Upper lobe of right lung (tissue), 1 donor: ENCODE measurements at regions of chr9 and their contacts with region 1.

Region 1: GRCh38 chr9:124617471-124618141 is 110.4 kb upstream of the NR5A1 start:
- DNase-seq: peak; percentile 82
- ATAC-seq: peak; percentile 98
- H3K4me3 ChIP-seq: no peak overlapping the region
- H3K27ac ChIP-seq: no peak overlapping the region
- H3K4me1 ChIP-seq: no peaks in the 10 kb centered on the region
- H3K27me3 ChIP-seq: no peaks in the 10 kb centered on the region
- CTCF ChIP-seq: peak; percentile 91

Region 2: DNA sequence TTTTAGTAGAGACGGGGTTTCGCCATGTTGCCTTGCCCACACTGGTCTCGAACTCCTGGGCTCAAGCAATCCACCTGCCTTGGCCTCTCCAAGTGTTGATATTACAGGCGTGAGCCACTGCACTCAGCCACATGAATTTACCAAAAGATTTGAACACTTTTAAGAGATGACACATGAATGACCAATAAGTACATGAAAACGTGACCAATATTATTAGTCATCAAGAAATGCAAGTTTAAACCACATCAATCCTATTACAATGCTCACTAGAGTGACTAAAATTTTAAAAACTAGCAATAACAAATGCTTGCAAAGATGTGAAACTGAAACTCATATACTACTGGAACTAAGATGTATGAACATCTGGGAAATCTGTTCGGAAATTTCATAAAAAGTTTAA is 99.2 kb after region 1 on chr9:
- intact Hi-C with region 1: loop called (anchors 10 kb)
- DNase-seq: no peak
- ATAC-seq: no peak
- H3K4me3 ChIP-seq: no peak overlapping the region
- H3K27ac ChIP-seq: no peak overlapping the region
- H3K4me1 ChIP-seq: no peaks in the 10 kb centered on the region
- H3K27me3 ChIP-seq: no peaks in the 10 kb centered on the region
- CTCF ChIP-seq: no peak